ENCODE measurements at regions of chr6 and their contacts with region 1.

Region 1: GRCh38 chr6:156564807-156565149 is 212.4 kb upstream of the ARID1B start:
- DNase-seq: no peak
- ATAC-seq: no peak
- H3K4me3 ChIP-seq: no peak overlapping the region
- H3K27ac ChIP-seq: no peak overlapping the region
- H3K4me1 ChIP-seq: no peaks in the 10 kb centered on the region
- H3K27me3 ChIP-seq: no peaks in the 10 kb centered on the region
- CTCF ChIP-seq: no peak

Region 2: GRCh38 chr6:156774863-156775405 is 210.2 kb after region 1 on chr6:
- intact Hi-C with region 1: loop called (anchors 5 kb)
- DNase-seq: no peak
- ATAC-seq: no peak
- H3K4me3 ChIP-seq: no peak overlapping the region
- H3K27ac ChIP-seq: no peak overlapping the region
- H3K4me1 ChIP-seq: peaks cover 5% of the 10 kb centered on the region
- H3K27me3 ChIP-seq: no peaks in the 10 kb centered on the region
- CTCF ChIP-seq: no peak

Measured in upper lobe of right lung (tissue), 1 donor.